AG04450 (cell line): ENCODE measurements at regions of chr20 and their contacts with region 1.

Region 1: GRCh38 chr20:34704177-34705007 is at the start of gene TP53INP2:
- DNase-seq: peak; percentile 74
- H3K4me3 ChIP-seq: peak within 1 kb of the TSS; percentile 86
- H3K27ac ChIP-seq: peak within 1 kb of the TSS; percentile 73
- H3K27me3 ChIP-seq: peaks cover 2% of the 10 kb centered on the region
- CTCF ChIP-seq: no peak
- polyA plus RNA-seq, gene TP53INP2: 5.9 and 8.6 TPM in 2 replicates

Region 2: GRCh38 chr20:34558320-34559218 is 145.8 kb before region 1 on chr20 and contains the start of gene MAP1LC3A:
- CTCF ChIA-PET with region 1: interaction called, 15 read pairs
- POLR2A ChIA-PET with region 1: interaction called, 7 read pairs
- DNase-seq: peak; percentile 88
- H3K4me3 ChIP-seq: peak within 1 kb of the TSS; percentile 71
- H3K27ac ChIP-seq: peak within 1 kb of the TSS; percentile 65
- H3K27me3 ChIP-seq: no peaks in the 10 kb centered on the region
- CTCF ChIP-seq: no peak
- polyA plus RNA-seq, gene MAP1LC3A: 15.9 and 26.7 TPM in 2 replicates

Region 3: GRCh38 chr20:34579191-34579978 is 125.0 kb before region 1 on chr20:
- CTCF ChIA-PET with region 1: interaction called, 17 read pairs
- POLR2A ChIA-PET with region 1: no interaction called
- DNase-seq: no peak
- H3K4me3 ChIP-seq: no peak overlapping the region
- H3K27ac ChIP-seq: no peak overlapping the region
- H3K27me3 ChIP-seq: no peaks in the 10 kb centered on the region
- CTCF ChIP-seq: peak; percentile 69